ENCODE measurements at regions of chr14 and their contacts with region 1.

Region 1: DNA sequence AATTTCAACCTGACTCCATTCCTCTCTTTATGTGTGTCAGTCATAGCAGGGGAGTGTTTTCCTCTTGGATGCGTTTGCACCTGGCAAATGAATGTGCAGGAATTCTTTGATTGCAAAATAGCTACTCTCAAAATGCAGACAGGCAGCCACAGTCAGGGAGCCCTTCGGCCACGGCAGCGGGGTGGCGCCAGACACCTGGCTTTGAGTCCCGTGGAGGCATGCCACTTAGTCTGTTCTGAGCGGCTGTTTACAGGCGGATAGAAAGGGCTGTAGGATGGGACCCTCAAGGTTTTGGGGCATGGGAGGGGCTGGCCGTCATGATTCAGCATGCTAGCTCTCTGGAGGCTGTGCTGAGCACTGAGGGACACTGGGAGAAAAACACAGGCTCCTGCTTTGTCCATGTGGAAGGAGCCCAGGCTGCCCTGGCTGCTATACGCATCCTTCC is 117.1 kb downstream of the SLC25A47 start:
- DNase-seq: peak; percentile 79
- H3K4me3 ChIP-seq: no peak overlapping the region
- H3K27ac ChIP-seq: peak overlapping the region; percentile 75
- H3K4me1 ChIP-seq: peaks cover 30% of the 10 kb centered on the region
- H3K27me3 ChIP-seq: no peaks in the 10 kb centered on the region
- CTCF ChIP-seq: peak; percentile 82 to 95

Region 2: DNA sequence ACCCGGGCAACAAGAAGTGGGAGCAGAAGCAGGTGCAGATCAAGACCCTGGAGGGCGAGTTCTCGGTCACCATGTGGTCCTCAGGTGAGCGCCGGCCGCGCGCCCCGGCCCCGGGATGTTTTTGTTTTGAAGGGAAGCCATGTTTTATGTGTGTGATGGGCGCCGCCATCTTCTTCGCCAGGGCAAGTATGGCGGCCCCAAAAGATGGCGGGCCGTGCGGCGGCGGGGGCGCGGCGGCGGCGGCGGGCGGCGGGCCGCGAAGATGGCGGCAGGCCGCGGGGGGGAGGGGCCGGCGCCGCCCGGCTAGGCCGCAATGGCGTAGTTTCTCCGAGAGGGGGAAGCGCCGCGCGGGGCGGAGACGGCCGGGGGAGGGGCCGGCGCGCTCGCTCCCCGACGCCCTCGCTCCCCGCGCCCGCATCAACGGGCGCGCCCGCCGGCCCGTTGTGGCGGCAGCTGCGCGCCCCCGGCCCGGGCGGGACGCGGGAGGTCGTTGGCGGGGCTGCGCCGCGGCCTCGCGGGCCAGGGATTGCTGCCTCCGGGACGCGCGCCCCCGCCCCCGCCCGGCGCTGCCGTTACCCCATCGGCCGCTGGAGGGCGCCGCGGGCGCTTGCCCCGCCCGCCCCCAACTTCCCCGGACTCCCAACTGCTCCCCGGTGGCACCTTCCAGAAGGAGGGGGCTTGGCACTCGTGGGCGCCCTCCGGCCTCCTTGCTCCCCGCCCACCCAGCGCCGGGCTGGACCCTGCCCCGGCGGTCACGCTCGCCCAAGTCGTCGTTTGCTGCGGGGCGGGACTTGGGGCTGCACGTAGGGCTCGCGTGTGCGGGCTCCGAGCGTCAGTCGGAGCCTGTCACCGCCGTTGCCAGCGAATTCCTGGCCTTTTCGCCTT is 200.1 kb before region 1 on chr14:
- CTCF ChIA-PET with region 1: no interaction called
- dilution Hi-C with region 1: no loop called
- in situ Hi-C with region 1: no loop called
- intact Hi-C with region 1: no loop called
- DNase-seq: peak; percentile 93
- H3K4me3 ChIP-seq: peak overlapping the region; percentile 66 to 81 (median 77)
- H3K27ac ChIP-seq: peak overlapping the region; percentile 79
- H3K4me1 ChIP-seq: peaks cover 13% of the 10 kb centered on the region
- H3K27me3 ChIP-seq: no peaks in the 10 kb centered on the region
- CTCF ChIP-seq: peak; percentile 21 to 59

Region 3: GRCh38 chr14:100359881-100360280 is 80.3 kb before region 1 on chr14:
- CTCF ChIA-PET with region 1: no interaction called
- dilution Hi-C with region 1: no loop called
- in situ Hi-C with region 1: no loop called
- intact Hi-C with region 1: no loop called
- DNase-seq: no peak
- H3K4me3 ChIP-seq: no peak overlapping the region
- H3K27ac ChIP-seq: no peak overlapping the region
- H3K4me1 ChIP-seq: no peaks in the 10 kb centered on the region
- H3K27me3 ChIP-seq: no peaks in the 10 kb centered on the region
- CTCF ChIP-seq: no peak

Region 4: GRCh38 chr14:100417466-100417865 is 22.7 kb before region 1 on chr14:
- CTCF ChIA-PET with region 1: interaction called, 10 read pairs
- dilution Hi-C with region 1: no loop called
- in situ Hi-C with region 1: no loop called
- intact Hi-C with region 1: loop called (anchors 1 kb)
- DNase-seq: peak; percentile 84
- H3K4me3 ChIP-seq: no peak overlapping the region
- H3K27ac ChIP-seq: peak overlapping the region; percentile 60
- H3K4me1 ChIP-seq: peaks cover 16% of the 10 kb centered on the region
- H3K27me3 ChIP-seq: no peaks in the 10 kb centered on the region
- CTCF ChIP-seq: peak; percentile 88 to 89

Region 5: DNA sequence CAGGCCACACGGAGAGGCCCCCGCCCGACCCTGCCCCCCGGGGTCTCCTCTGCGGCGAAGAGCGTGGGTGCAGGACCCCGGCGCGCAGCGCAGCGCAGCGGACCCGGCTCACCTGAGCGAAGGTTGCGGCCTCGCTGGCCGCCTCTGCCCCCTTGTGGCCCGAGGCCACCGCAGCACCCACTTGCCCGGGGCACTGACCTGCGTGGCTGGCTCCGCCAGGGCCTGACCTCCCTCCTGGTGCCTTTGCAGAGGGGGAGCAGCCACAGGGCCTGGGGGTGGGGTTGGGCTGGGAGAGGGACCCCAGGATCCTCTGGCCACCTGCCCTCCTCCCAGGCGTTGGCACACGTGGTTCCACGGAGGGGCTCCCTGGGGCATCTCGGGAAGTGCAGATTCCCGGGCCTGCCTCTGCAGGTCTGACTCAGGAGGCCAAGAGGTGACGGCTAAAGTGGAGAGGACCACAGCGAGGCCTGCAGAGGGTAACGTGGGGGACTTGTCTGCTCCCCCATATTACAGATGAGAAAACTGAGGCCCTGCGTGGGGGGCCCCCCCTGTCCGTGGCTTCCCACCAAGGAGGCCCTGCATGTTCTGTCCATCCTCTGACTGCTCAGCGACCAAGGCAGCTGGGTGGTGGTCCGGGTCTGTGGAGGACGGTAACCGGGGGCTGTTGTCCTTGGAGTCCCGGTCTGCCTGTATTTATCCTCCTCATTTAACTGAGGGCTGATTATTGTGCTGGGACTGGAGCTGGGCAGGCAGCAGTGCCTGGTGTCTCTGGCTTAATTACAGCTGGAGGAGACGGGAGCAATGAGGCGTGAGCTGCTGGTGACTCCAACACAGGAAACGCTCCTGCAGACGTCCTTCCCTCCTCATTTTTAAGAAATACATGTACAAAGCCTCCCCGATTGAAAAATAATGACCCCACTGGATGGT is 214.9 kb after region 1 on chr14:
- CTCF ChIA-PET with region 1: interaction called, 3 read pairs
- dilution Hi-C with region 1: no loop called
- in situ Hi-C with region 1: no loop called
- intact Hi-C with region 1: loop called (anchors 1 kb)
- DNase-seq: peak; percentile 12
- H3K4me3 ChIP-seq: no peak overlapping the region
- H3K27ac ChIP-seq: no peak overlapping the region
- H3K4me1 ChIP-seq: peaks cover 5% of the 10 kb centered on the region
- H3K27me3 ChIP-seq: no peaks in the 10 kb centered on the region
- CTCF ChIP-seq: peak; percentile 47 to 86

Region 6: DNA sequence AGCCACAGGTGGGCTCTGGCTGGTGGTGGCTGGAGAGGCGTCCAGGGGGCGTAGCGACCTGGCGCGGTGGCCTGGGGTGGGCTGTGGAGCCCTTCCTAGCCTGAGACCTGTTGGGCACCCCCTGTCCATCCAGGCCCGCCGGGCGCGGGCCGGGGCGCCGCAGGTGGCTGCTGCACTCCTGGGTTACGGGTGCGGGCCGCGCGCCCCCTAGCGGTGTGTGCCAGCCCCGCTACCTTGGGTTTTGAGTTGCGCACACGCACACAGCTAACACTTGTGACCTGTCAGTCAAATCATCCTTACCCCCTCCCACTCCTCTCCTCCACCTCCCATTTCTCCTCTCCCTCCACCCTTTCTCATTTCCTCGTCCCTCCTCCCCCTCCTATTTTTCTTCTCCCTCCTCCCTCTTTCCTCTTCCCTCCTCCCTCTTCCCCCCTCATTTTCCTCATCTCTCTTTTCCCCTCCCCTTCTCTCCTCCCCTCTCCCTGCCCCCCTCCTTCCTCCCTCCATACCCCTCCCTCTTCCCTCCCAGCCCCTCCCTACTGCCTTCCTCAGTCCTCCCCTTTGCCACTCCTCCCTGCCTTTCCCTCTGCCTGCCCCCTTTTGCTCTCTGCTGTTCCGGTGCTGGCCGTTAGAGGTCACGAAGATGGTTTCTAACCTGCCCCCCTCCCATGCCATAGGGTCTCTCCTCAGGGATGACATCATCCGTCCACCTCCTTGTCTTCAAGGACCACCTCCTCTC is 388.0 kb after region 1 on chr14:
- CTCF ChIA-PET with region 1: no interaction called
- dilution Hi-C with region 1: no loop called
- in situ Hi-C with region 1: no loop called
- intact Hi-C with region 1: loop called (anchors 5 kb)
- DNase-seq: peak; percentile 20
- H3K4me3 ChIP-seq: peak overlapping the region; percentile 32 to 40 (median 32)
- H3K27ac ChIP-seq: no peak overlapping the region
- H3K4me1 ChIP-seq: no peaks in the 10 kb centered on the region
- H3K27me3 ChIP-seq: peaks cover 6% of the 10 kb centered on the region
- CTCF ChIP-seq: peak; percentile 46 to 69

Region 7: GRCh38 chr14:101665515-101666078 is 1225.4 kb after region 1 on chr14:
- CTCF ChIA-PET with region 1: no interaction called
- dilution Hi-C with region 1: no loop called
- in situ Hi-C with region 1: no loop called
- intact Hi-C with region 1: loop called (anchors 2 kb)
- DNase-seq: peak; percentile 52
- H3K4me3 ChIP-seq: no peak overlapping the region
- H3K27ac ChIP-seq: no peak overlapping the region
- H3K4me1 ChIP-seq: no peaks in the 10 kb centered on the region
- H3K27me3 ChIP-seq: no peaks in the 10 kb centered on the region
- CTCF ChIP-seq: peak; percentile 70 to 84